Naive thymus-derived CD4-positive, alpha-beta T cell (primary cell): ENCODE measurements at regions of chr19 and their contacts with region 1.

Region 1: GRCh38 chr19:48391107-48391986 is at the start of gene KDELR1:
- DNase-seq: peak; percentile 55 to 89 (median 72)
- ATAC-seq: peak; percentile 92
- H3K4me3 ChIP-seq: peak within 1 kb of the TSS; percentile 96
- H3K4me3 Mint-ChIP-seq: peak within 1 kb of the TSS; percentile 84 to 95 (median 92)
- H3K27ac ChIP-seq: peak within 1 kb of the TSS; percentile 92
- H3K27ac Mint-ChIP-seq: peak within 1 kb of the TSS; percentile 78 to 97 (median 93)
- H3K4me1 ChIP-seq: peaks cover 15 to 32% of the 10 kb centered on the region in 2 donors
- H3K4me1 Mint-ChIP-seq: peaks cover 5 to 46% (median 36%) of the 10 kb centered on the region in 7 donors
- H3K27me3 ChIP-seq: peaks cover 9 to 21% of the 10 kb centered on the region in 2 donors
- H3K27me3 Mint-ChIP-seq: peaks cover 9 to 42% (median 21%) of the 10 kb centered on the region in 5 donors
- total RNA-seq, gene KDELR1: 42.7 to 73.9 (median 52.3) TPM

Region 2: GRCh38 chr19:48403606-48404005 is 12.3 kb after region 1 on chr19:
- CTCF ChIA-PET with region 1: interaction called, 11 read pairs
- POLR2A ChIA-PET with region 1: interaction called, 6 read pairs
- intact Hi-C with region 1: loop called in 1 of 2 experiments (anchors 1 kb)
- DNase-seq: peak in 5 of 9 donors; percentile 35 to 52 (median 47)
- ATAC-seq: peak; percentile 69
- H3K4me3 ChIP-seq: no peak overlapping the region
- H3K4me3 Mint-ChIP-seq: no peak overlapping the region
- H3K27ac ChIP-seq: no peak overlapping the region
- H3K27ac Mint-ChIP-seq: peak overlapping the region in 1 of 9 donors; percentile 5
- H3K4me1 ChIP-seq: no peaks in the 10 kb centered on the region
- H3K4me1 Mint-ChIP-seq: peaks cover 5 to 22% (median 13%) of the 10 kb centered on the region in 7 donors
- H3K27me3 ChIP-seq: no peaks in the 10 kb centered on the region
- H3K27me3 Mint-ChIP-seq: peaks cover 5 to 12% (median 6%) of the 10 kb centered on the region in 5 donors

Region 3: GRCh38 chr19:48419158-48419920 is 28.0 kb after region 1 on chr19:
- CTCF ChIA-PET with region 1: no interaction called
- POLR2A ChIA-PET with region 1: interaction called, 6 read pairs
- intact Hi-C with region 1: loop called in 1 of 2 experiments (anchors 1 kb)
- DNase-seq: peak; percentile 44 to 77 (median 64)
- ATAC-seq: peak; percentile 79
- H3K4me3 ChIP-seq: peak overlapping the region; percentile 15
- H3K4me3 Mint-ChIP-seq: peak overlapping the region; percentile 60 to 90 (median 80)
- H3K27ac ChIP-seq: no peak overlapping the region
- H3K27ac Mint-ChIP-seq: peak overlapping the region in 6 of 9 donors; percentile 6 to 93 (median 74)
- H3K4me1 ChIP-seq: peaks cover 0 to 5% of the 10 kb centered on the region in 2 donors
- H3K4me1 Mint-ChIP-seq: peaks cover 12 to 30% (median 22%) of the 10 kb centered on the region in 7 donors
- H3K27me3 ChIP-seq: no peaks in the 10 kb centered on the region
- H3K27me3 Mint-ChIP-seq: peaks cover 0 to 22% (median 5%) of the 10 kb centered on the region in 5 donors